OCI-LY7 (cell line): ENCODE measurements at regions of chr2 and their contacts with region 1.

Region 1: DNA sequence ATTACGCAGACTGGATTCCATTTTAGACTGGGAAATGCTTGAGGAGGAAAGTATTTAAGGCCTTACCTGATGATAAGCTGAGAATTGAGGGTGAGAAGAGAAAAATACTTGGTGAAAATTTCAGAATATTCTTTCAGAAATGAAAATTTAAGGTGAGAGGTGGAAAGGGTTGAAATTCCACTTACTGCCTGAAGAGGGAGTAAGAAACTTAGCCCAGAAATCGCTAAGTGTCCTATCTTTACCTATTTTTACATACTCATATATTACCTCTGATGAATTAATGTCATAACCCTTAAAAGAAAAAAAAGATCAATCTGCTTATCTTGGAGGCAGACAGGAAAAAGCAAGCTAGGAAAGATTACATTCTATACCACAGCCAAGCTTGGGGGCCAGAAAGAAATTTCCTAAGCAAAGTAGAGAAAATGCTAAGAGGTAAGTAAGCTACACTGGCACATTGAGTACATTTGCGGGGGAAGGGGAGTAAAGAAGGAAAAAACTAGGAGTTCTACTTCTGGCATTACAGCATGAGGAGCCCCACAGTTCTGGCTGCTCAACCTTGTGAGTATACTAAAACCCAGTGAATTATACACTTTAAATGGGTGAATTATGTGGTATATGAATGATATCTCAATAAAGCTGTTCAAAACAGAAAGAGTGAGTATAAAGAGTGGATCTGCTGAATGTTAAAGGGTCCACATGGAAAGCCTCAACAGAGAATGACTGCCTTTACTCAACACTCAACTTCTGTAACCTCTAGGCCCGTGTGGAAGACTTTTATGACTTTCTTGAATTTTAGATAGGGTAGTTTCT is 33.8 kb downstream of the SMC6 start:
- DNase-seq: peak; percentile 42
- H3K4me3 ChIP-seq: no peak overlapping the region
- H3K27ac ChIP-seq: no peak overlapping the region
- H3K4me1 ChIP-seq: no peaks in the 10 kb centered on the region
- CTCF ChIP-seq: peak; percentile 97

Region 2: DNA sequence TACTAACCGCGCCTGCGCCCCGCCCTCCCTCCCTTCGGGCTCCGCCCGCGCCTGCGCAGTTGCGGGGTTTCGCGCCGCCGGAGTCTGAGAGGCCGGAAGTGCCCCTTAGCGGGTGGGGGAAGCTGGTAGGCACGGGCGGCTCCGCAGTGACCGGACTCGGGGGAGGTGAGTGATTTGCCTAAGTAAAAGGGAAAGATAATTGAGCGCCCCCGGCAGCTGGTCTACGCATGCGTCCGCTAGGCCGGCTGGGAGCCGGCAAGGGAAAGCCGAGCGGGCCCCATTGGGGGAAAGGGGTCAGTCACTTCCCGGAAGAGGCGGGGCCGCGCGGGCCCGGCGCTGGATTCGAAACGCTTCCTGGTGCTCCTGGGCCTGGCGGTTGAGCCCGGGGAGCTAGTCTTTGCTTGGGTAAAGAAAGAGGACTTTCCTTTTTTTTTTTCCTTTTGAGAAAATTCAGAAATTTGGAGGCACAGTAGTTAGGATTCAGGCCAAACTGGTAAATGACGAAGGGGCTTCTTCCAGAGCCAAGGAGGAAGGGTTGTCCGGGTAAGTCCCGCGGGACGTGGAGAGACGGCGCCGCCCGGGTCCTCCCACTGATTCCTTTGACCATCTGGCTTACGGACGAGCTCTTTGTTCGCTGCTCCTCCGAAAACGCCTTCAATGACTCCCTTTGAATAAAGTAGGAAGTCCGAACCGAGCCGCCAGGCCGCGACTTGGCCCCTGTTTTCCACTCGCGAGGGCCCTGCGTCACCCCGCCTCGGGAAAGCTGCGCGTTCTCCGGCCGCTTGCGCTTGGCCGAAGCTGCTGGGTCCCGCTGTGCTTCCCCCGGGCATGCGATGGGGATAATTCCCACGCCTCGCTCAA is 34.3 kb after region 1 on chr2 and contains the starts of genes GEN1 and SMC6:
- CTCF ChIA-PET with region 1: no interaction called
- POLR2A ChIA-PET with region 1: interaction called, 8 read pairs
- intact Hi-C with region 1: loop called (anchors 2 kb)
- DNase-seq: peak; percentile 97
- H3K4me3 ChIP-seq: peak within 1 kb of the TSS; percentile 98
- H3K27ac ChIP-seq: peak within 1 kb of the TSS; percentile 89
- H3K4me1 ChIP-seq: peaks cover 52% of the 10 kb centered on the region
- CTCF ChIP-seq: no peak
- total RNA-seq, gene GEN1: 37.6 and 52.5 TPM in 2 replicates
- total RNA-seq, gene SMC6: 37.0 and 48.9 TPM in 2 replicates

Region 3: DNA sequence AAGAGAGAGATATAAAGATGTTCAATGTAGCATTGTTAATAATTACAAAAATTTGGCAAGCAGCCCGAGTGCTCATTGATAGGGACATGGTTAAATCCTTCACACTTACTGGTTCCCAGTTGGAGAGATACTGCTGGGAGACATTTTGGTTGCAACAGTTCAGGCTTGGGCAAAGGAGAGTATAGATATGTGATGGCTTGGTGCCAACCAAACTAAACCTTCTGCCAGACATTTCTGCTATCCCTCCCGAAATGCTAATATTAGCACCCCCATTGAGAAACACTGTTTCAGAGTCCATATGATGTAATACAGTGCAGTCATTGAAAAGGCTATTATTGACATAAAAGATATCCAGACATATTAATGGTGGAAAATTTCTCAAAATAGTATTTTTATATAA is 45.6 kb after region 1 on chr2:
- CTCF ChIA-PET with region 1: no interaction called
- POLR2A ChIA-PET with region 1: no interaction called
- intact Hi-C with region 1: loop called (anchors 5 kb)
- DNase-seq: no peak
- H3K4me3 ChIP-seq: no peak overlapping the region
- H3K27ac ChIP-seq: no peak overlapping the region
- H3K4me1 ChIP-seq: no peaks in the 10 kb centered on the region
- CTCF ChIP-seq: no peak

Region 4: DNA sequence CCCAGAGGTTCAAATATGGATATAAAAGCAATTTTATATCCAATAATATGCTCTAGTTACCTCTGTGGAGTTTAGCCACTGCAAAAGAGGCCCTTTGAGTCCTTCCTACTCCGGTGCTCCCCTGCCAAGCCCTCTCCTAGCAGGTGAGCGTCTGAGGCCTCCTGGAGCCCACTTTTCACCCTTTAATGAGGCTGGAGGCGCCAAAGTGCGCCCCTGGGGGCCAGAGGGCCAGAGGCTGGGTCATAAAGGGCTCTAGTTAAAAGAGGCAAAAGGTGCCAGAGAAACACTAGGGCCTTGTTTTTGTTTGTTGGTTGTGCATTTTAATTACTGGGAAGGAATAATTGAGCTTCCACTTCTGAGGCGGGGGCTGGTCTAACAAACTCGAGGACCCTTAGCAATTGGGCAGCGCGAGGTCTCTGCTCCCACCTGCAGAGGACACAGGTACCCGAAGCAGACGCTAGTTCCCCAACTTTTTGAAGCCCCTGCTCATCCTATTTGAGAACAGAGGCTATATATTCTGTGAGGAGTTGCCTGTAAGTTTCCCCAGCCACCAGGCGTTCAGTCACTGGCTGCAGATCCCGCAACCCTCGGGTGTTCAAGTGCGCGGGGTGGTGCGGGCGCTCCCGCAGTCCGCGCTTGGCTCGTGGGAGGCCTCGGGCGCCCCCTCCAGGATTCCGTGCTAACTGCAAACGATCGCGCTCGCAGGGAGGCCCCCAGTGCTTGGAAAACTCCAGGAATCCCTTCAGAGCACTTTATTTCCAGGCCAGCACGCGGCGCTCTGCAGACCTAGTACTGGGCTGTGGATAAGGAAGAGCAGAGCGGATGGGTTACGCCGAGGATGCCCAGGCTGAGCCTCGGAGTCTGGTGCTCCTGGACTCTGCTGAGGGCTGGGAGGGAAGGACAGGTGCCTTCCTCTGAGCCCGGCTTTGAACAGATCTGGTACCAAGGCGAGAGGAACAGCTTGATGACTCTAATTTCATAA is 110.6 kb after region 1 on chr2:
- CTCF ChIA-PET with region 1: no interaction called
- POLR2A ChIA-PET with region 1: no interaction called
- intact Hi-C with region 1: loop called (anchors 5 kb)
- DNase-seq: peak; percentile 8
- H3K4me3 ChIP-seq: no peak overlapping the region
- H3K27ac ChIP-seq: no peak overlapping the region
- H3K4me1 ChIP-seq: no peaks in the 10 kb centered on the region
- CTCF ChIP-seq: peak; percentile 81

Region 5: DNA sequence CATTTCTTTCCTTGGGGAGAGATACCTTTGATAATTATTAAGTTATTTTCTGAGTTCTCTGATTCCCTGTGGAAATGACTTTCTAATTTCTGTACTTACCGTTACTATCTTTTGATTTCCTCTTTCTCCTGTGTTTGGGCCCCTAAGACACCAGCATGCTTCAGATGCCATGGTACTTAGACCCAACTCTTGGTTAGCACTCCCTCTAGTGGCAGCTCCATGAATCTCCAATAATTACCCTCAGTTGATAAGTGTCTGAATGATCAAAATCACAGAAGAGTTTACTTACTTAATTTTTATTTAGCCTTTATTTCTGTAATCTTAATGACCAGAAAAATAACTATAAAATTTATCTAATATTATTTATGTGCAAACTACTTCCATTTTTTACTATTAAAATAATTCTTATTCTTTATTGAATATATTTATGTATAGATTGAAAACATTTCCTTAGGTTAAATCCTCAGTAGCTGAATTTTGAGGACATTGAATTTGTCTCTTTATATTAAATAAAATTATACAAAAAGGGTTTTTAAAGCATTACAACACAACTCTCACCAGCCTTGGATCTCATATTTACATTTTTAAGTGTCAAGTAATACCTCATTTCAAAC is 459.1 kb after region 1 on chr2:
- CTCF ChIA-PET with region 1: no interaction called
- POLR2A ChIA-PET with region 1: no interaction called
- intact Hi-C with region 1: loop called (anchors 5 kb)
- DNase-seq: peak; percentile 68
- H3K4me3 ChIP-seq: no peak overlapping the region
- H3K27ac ChIP-seq: no peak overlapping the region
- H3K4me1 ChIP-seq: no peaks in the 10 kb centered on the region
- CTCF ChIP-seq: peak; percentile 95

Region 6: DNA sequence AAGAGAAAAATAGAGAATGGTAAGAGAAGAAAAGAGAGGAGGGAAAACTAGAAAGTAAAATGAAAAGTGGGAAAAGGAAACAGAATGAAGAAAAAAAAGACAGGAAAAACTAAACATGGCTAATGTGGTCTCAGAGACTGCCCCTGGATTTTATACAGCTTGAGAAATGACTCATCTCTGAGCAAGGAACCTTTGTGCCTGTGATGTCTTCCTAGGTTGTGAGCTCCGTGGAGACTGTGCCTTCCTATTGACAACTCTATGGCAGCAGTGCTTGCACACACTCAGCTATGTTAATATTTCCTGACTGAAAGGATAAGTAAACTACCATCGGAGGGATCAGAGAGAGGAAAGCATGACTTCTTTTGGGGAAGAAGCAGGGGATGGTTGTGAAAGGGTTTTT is 636.9 kb after region 1 on chr2:
- CTCF ChIA-PET with region 1: no interaction called
- POLR2A ChIA-PET with region 1: no interaction called
- intact Hi-C with region 1: loop called (anchors 5 kb)
- DNase-seq: no peak
- H3K4me3 ChIP-seq: no peak overlapping the region
- H3K27ac ChIP-seq: no peak overlapping the region
- H3K4me1 ChIP-seq: no peaks in the 10 kb centered on the region
- CTCF ChIP-seq: no peak